ENCODE measurements at regions of chr5 and their contacts with region 1.

Region 1: GRCh38 chr5:130109152-130109551 is 204.9 kb downstream of the CHSY3 start:
- DNase-seq: peak; percentile 6
- H3K4me3 Mint-ChIP-seq: no peak overlapping the region
- H3K27ac Mint-ChIP-seq: no peak overlapping the region
- H3K4me1 Mint-ChIP-seq: no peaks in the 10 kb centered on the region
- H3K27me3 Mint-ChIP-seq: no peaks in the 10 kb centered on the region
- CTCF ChIP-seq: peak; percentile 63

Region 2: GRCh38 chr5:129996896-129997295 is 112.3 kb before region 1 on chr5:
- CTCF ChIA-PET with region 1: no interaction called
- intact Hi-C with region 1: no loop called
- DNase-seq: no peak
- H3K4me3 Mint-ChIP-seq: no peak overlapping the region
- H3K27ac Mint-ChIP-seq: no peak overlapping the region
- H3K4me1 Mint-ChIP-seq: no peaks in the 10 kb centered on the region
- H3K27me3 Mint-ChIP-seq: no peaks in the 10 kb centered on the region
- CTCF ChIP-seq: no peak

Region 3: GRCh38 chr5:130141659-130142320 is 32.6 kb after region 1 on chr5:
- CTCF ChIA-PET with region 1: interaction called, 5 read pairs
- intact Hi-C with region 1: loop called (anchors 1 kb)
- DNase-seq: peak; percentile 75
- H3K4me3 Mint-ChIP-seq: no peak overlapping the region
- H3K27ac Mint-ChIP-seq: no peak overlapping the region
- H3K4me1 Mint-ChIP-seq: no peaks in the 10 kb centered on the region
- H3K27me3 Mint-ChIP-seq: no peaks in the 10 kb centered on the region
- CTCF ChIP-seq: peak; percentile 71

Region 4: DNA sequence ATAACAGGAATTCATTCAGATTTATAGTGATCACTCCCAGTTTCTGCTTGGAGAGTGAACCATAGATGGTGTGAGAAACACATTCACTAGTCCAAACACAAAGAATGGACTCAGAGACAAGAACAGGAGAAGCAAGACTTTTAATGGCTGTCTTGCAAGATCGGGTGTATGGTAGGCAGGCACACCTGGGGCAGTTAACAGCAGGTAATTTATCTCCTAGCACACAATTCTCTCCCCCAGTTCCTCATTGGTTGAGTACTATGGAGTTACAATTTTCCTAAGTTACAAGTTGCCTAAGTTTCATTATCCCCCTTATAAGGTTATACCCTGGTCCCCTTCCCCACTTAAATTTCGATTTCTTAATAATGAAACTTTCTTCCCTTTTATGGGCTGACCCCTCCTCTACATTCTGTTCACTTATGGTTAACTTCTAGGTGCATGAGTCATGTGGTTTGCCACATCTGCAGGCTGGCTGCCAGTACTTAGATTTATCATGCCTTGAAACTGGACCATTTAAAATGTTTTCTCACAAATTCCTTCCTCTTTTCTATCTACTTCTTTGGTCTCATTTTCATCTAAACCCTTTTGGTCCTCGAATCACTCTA is 432.6 kb after region 1 on chr5:
- CTCF ChIA-PET with region 1: interaction called, 3 read pairs
- intact Hi-C with region 1: loop called (anchors 2 kb)
- DNase-seq: peak; percentile 45
- H3K4me3 Mint-ChIP-seq: no peak overlapping the region
- H3K27ac Mint-ChIP-seq: peak overlapping the region; percentile 41
- H3K4me1 Mint-ChIP-seq: peaks cover 34% of the 10 kb centered on the region
- H3K27me3 Mint-ChIP-seq: no peaks in the 10 kb centered on the region
- CTCF ChIP-seq: no peak

Region 5: GRCh38 chr5:130720355-130720754 is 611.2 kb after region 1 on chr5:
- CTCF ChIA-PET with region 1: no interaction called
- intact Hi-C with region 1: loop called (anchors 1 kb)
- DNase-seq: peak; percentile 24
- H3K4me3 Mint-ChIP-seq: no peak overlapping the region
- H3K27ac Mint-ChIP-seq: no peak overlapping the region
- H3K4me1 Mint-ChIP-seq: peaks cover 10% of the 10 kb centered on the region
- H3K27me3 Mint-ChIP-seq: no peaks in the 10 kb centered on the region
- CTCF ChIP-seq: peak; percentile 70

Region 6: GRCh38 chr5:130815246-130815645 is 706.1 kb after region 1 on chr5:
- CTCF ChIA-PET with region 1: no interaction called
- intact Hi-C with region 1: no loop called
- DNase-seq: no peak
- H3K4me3 Mint-ChIP-seq: no peak overlapping the region
- H3K27ac Mint-ChIP-seq: no peak overlapping the region
- H3K4me1 Mint-ChIP-seq: no peaks in the 10 kb centered on the region
- H3K27me3 Mint-ChIP-seq: no peaks in the 10 kb centered on the region
- CTCF ChIP-seq: no peak

Region 7: GRCh38 chr5:130912088-130912487 is 802.9 kb after region 1 on chr5:
- CTCF ChIA-PET with region 1: no interaction called
- intact Hi-C with region 1: loop called (anchors 1 kb)
- DNase-seq: no peak
- H3K4me3 Mint-ChIP-seq: no peak overlapping the region
- H3K27ac Mint-ChIP-seq: no peak overlapping the region
- H3K4me1 Mint-ChIP-seq: no peaks in the 10 kb centered on the region
- H3K27me3 Mint-ChIP-seq: no peaks in the 10 kb centered on the region
- CTCF ChIP-seq: no peak

Measured in Calu3 (cell line).